ENCODE measurements at regions of chr6 and their contacts with region 1.

Region 1: GRCh38 chr6:34608321-34609091 is 52.4 kb upstream of the SPDEF start:
- DNase-seq: no peak
- ATAC-seq: no peak

Region 2: GRCh38 chr6:34248727-34249551 is 359.6 kb before region 1 on chr6 and contains the start of gene SMIM29:
- intact Hi-C with region 1: loop called (anchors 5 kb)
- DNase-seq: peak; percentile 98
- ATAC-seq: peak; percentile 94
- total RNA-seq, gene SMIM29: 20.7 TPM

Region 3: DNA sequence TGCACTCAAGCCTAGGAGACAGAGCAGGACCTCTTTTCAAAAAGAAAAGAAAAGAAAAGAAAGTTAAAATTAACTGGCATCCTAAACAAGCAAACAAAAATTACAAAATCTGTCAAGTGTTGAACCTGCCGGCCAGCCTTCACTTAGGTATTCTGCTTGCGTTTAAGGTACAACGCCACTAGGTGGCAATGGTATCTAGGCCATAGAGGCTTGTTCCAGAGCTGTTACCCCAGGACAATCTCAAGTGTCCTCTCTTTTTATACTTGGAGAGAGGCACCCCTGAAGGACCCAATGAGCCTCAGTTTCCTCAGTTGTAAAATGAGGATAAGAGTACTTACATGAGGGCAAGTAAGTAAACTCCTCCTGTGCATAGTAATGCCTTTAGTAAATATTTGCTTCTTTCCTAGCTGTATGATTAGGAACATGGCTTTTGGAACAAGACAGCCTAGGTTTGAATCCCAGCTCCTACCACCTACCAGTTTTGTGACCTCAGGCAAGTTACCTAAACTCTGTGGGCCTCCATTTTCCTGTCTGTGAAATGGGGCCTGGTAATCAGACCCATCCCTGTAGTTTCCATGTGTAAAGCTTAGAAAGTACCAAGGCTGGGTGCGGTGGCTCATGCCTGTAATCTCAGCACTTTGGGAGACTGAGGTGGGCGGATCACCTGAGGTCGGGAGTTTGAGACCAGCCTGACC is 148.5 kb before region 1 on chr6:
- intact Hi-C with region 1: loop called (anchors 1 kb)
- DNase-seq: no peak
- ATAC-seq: peak; percentile 53

Region 4: GRCh38 chr6:34526992-34527728 is 81.3 kb before region 1 on chr6:
- intact Hi-C with region 1: loop called (anchors 1 kb)
- DNase-seq: peak; percentile 98
- ATAC-seq: peak; percentile 94